ENCODE measurements at regions of chr19 and their contacts with region 1.

Region 1: DNA sequence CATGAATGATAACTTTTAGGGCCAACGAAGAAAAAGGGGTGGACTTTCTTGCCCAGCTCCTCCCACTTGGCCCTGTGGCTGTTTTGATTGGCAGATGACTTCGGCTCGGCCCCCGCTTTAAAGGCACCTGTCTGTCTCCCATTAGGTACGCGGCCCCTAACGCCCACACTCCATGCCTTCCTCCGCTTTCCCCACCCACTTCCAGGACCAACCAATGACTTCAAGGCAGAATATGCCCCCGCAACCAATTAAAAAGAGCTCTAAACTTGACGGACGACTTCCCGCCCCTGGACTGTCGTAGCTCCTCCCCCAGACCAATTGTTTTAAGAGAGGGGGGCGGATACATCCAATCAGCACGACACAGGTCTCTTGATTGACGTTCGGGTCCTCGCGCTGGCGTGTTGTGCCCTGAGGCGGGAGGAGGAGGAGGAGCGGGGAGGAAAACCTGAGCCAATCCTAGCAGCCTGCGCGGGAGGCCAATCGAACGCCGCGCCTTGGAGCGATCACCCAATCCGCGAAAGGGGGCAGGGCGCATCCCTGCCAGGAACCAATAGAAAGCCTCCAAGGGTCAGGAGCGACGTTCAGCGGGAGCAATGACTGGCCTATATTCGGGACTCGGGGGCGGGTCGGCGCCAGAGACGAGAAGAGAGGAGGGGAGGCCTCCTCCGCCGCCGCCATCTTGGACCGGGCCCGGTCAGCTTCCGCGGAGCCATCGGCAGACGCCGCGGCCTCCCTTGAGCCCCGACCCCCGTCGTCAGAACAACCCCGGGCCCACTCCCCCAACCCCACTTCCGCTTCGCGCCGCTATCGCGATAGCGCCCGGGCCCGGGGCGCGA is at the start of gene CNOT3:
- DNase-seq: peak; percentile 99 to 100
- ATAC-seq: peak; percentile 97
- H3K4me3 ChIP-seq: peak within 1 kb of the TSS; percentile 84 to 87
- H3K27ac ChIP-seq: peak within 1 kb of the TSS; percentile 59 to 77
- H3K4me1 ChIP-seq: no peaks in the 10 kb centered on the region
- H3K27me3 ChIP-seq: no peaks in the 10 kb centered on the region
- total RNA-seq, gene CNOT3: 33.5 to 35.9 TPM

Region 2: DNA sequence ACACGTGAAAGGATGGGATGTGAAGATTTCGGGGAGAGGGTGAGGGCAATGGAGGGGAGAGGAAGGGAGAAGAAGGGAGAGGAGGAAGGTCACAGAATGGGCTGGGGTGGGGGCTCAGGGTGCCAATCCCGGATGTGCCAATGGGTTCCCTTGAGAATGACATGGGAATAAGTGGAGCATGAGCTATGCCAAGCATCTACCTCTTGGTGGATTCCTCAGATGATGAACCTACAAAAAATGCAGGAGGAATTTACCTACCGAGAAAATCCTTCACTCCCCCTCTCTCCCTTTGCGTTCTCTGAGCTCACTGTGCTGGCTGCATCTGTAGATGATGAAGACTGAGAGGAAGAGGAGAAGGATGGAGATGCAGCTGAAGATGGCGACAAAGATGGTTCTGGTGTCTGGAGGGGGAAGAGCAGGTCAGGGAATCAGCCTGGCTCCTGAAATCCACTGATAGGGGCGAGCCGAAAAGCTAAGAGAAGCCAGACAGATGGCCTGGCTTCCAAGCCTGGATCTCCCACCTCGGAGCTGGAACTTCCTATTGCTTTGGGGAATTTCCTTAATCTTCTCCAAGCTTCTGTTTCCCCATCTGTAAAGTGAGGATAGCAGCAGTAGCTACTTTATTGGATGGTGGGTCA is 95.2 kb before region 1 on chr19:
- intact Hi-C with region 1: no loop called
- DNase-seq: peak in 1 of 2 donors; percentile 7
- ATAC-seq: no peak
- H3K4me3 ChIP-seq: no peak overlapping the region
- H3K27ac ChIP-seq: no peak overlapping the region
- H3K4me1 ChIP-seq: no peaks in the 10 kb centered on the region
- H3K27me3 ChIP-seq: no peaks in the 10 kb centered on the region

Region 3: DNA sequence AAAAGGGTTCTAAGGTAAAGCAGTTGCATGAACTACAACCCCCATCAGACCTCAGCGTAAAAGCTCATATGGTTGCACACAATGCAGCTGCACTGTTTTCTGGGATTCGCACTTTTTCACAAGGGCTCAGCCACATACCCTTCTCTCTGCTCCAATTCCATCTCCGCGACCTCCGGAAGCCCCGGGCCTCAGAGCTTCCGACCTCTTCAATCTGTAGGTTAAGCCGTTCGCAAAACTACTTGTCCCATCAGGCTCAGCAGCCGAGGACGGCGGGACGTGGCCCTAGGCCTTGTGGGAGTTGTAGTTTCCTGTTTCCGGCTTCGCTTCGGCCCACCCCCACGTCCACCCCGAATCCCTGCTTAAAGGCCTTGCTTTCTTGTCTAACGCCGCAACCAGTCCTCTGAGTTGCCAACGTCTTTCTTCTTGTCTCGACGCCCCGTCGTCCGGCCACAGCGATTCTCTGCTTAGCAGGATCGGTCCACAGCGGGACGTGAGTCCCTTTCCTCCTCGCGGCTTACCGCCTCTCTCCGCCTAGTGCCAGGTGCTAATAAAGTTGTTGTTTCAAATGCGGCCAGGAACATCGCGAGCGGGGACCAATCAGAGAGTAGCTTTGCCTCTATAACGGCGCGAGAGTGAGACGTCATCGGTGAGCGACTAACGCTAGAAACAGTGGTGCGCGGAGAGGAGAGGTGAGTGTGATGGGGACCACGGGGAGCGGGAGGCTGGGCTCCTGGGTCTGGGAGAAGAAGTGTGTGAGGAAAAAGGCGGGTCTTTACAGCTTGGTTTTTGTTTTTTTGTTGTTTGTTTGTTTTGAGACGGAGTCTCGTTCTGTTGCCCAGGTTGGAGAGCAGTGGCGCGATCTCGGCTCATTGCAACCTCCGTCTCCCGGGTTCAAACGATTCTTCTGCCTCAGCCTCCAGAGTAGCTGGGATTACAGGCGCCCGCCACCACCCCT is 21.9 kb before region 1 on chr19 and contains the starts of genes PRPF31 and TFPT:
- intact Hi-C with region 1: loop called in 1 of 2 experiments (anchors 1 kb)
- DNase-seq: peak; percentile 98
- ATAC-seq: peak; percentile 97
- H3K4me3 ChIP-seq: peak within 1 kb of the TSS; percentile 41 to 59
- H3K27ac ChIP-seq: peak within 1 kb of the TSS in 1 of 2 donors; percentile 51
- H3K4me1 ChIP-seq: no peaks in the 10 kb centered on the region
- H3K27me3 ChIP-seq: no peaks in the 10 kb centered on the region
- total RNA-seq, gene PRPF31: 41.5 to 50.4 TPM
- total RNA-seq, gene TFPT: 12.9 to 17.3 TPM

Region 4: DNA sequence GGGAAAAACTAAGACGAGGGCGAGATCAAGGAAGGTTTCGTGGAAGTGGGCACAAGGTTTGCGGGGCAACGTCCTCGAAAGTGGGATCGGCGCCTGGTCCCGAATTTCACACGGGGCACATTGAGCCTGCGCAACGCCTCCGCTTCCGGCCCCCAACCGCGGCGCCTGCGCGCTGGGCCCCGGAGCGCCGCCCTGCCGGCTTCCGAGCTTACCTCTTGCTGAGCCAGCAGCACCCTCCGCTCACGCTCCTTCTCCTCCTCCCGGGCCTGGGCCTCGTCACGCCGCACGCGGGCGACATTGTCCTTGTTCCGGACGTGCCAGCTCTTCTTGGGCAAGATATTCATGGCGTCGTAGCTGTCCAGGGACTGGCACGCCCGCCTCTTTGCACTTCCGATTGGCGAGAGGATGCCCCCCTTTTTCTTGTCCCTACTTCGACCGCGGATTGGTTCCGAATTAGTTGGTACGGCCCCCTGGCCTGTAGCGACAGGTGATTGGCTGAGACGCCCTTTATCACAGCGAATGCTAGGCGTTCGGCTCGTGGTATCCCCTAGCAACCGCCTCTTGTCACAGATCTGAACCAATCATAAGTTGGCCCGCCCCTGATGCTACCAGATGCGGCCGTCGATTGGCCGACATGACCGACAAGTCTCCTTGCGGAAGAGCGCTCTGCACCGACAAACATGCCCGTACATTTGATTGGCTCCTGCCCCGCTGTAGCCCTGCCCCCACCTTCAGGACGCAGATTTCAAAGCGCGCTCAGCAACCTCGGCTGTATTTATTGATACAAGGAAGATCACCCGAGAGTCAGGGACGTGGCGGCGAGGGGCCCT is 22.3 kb after region 1 on chr19 and contains the start of gene LENG1:
- intact Hi-C with region 1: loop called in 1 of 2 experiments (anchors 1 kb)
- DNase-seq: peak; percentile 98 to 100
- ATAC-seq: peak; percentile 97
- H3K4me3 ChIP-seq: peak within 1 kb of the TSS; percentile 47 to 51
- H3K27ac ChIP-seq: peak within 1 kb of the TSS in 1 of 2 donors; percentile 96
- H3K4me1 ChIP-seq: no peaks in the 10 kb centered on the region
- H3K27me3 ChIP-seq: no peaks in the 10 kb centered on the region
- total RNA-seq, gene LENG1: 5.7 to 6.0 TPM

Region 5: GRCh38 chr19:54189735-54190502 is 52.6 kb after region 1 on chr19:
- intact Hi-C with region 1: loop called in 1 of 2 experiments (anchors 1 kb)
- DNase-seq: peak; percentile 100
- ATAC-seq: peak; percentile 91
- H3K4me3 ChIP-seq: peak overlapping the region in 1 of 2 donors; percentile 20
- H3K27ac ChIP-seq: peak overlapping the region; percentile 47 to 94
- H3K4me1 ChIP-seq: no peaks in the 10 kb centered on the region
- H3K27me3 ChIP-seq: no peaks in the 10 kb centered on the region

Region 6: DNA sequence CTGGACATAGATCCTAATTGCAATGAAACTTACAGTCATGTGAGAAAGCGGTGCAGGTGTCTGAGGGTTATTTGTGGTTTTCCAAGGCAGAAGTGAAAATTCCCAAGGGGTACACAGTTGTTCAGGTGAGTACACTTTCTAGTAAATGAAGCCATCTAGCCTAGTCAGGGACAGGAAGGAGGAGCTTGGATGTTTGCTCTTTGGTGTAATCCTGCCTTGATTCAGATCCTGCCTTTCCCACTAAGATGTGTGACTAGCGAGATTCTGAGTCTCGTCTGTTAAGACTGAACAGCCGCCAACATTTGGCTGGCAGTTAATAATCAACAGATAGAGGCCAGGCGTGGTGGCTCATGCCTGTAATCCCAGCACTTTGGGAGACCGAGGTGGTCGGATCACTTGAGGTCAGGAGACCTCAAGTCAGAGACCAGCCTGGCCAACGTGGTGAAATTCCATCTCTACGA is 65.9 kb after region 1 on chr19:
- intact Hi-C with region 1: loop called in 1 of 2 experiments (anchors 2 kb)
- DNase-seq: peak in 1 of 2 donors; percentile 6
- ATAC-seq: no peak
- H3K4me3 ChIP-seq: no peak overlapping the region
- H3K27ac ChIP-seq: no peak overlapping the region
- H3K4me1 ChIP-seq: no peaks in the 10 kb centered on the region
- H3K27me3 ChIP-seq: no peaks in the 10 kb centered on the region